ENCODE measurements at regions of chr9 and their contacts with region 1.

Region 1: DNA sequence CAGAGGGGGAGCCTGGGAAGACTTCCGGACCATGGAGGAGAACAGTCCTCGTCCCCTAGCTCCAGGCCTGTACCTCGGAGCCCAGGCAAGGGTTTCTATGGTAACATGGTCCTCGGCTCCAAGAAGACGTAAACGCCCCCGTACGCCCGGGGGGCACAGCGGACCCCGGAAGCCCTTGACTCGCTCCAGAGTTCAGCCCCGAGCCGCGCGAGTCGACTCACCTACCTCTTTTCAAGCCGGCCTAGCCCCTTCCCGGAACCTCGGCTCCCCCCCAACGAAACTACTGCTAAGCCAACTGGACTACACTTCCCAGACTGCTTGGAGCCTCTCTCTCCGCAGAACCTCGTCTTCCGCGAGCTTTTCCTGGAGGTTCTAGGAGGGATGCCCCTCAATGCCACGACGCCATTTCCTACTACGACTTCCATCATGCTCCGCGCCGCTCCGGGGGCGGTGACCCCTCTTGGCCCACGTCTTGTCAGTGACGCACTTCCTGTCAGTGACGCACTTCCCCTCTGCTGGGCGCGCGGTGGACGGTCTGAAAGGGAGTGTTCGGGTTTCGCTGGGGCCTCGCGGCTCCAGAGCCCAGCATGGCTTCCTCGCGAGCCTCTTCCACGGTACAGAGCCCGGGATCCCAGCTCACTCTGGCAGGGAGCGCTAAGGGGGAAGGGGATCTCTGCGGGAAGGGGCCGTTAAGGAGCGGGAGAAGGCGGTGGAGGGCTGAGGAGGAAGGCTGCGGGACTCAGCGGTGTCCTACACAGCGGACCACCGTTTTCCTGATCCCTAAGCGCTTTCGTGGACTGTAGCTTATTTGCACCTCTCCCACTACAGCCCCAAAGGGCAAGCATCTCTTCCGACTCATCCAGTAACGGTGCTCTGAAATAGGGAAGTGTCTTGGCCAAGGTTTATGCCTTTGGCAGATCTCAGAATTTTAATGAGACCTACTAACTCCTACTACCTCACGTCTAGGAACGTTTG is at the starts of genes CDC26 and PRPF4:
- DNase-seq: peak; percentile 91 to 97 (median 94)
- H3K4me3 ChIP-seq: peak within 1 kb of the TSS; percentile 86 to 92
- H3K4me3 Mint-ChIP-seq: no peak within 1 kb of the TSS
- H3K27ac ChIP-seq: peak within 1 kb of the TSS; percentile 93
- H3K27ac Mint-ChIP-seq: no peak within 1 kb of the TSS
- H3K4me1 ChIP-seq: peaks cover 22% of the 10 kb centered on the region
- H3K4me1 Mint-ChIP-seq: peaks cover 14 to 32% (median 21%) of the 10 kb centered on the region in 4 donors
- H3K27me3 ChIP-seq: no peaks in the 10 kb centered on the region
- H3K27me3 Mint-ChIP-seq: no peaks in the 10 kb centered on the region
- total RNA-seq, gene CDC26: 44.4 to 47.3 TPM
- total RNA-seq, gene PRPF4: 20.7 to 23.2 TPM

Region 2: GRCh38 chr9:111483862-111484571 is 1791.4 kb before region 1 on chr9 and contains the start of gene ECPAS:
- CTCF ChIA-PET with region 1: no interaction called
- POLR2A ChIA-PET with region 1: no interaction called
- intact Hi-C with region 1: loop called (anchors 2 kb)
- DNase-seq: peak; percentile 66 to 72 (median 71)
- H3K4me3 ChIP-seq: peak within 1 kb of the TSS; percentile 69 to 89
- H3K4me3 Mint-ChIP-seq: peak within 1 kb of the TSS; percentile 81 to 90 (median 86)
- H3K27ac ChIP-seq: peak within 1 kb of the TSS; percentile 83
- H3K27ac Mint-ChIP-seq: peak within 1 kb of the TSS; percentile 86 to 93 (median 89)
- H3K4me1 ChIP-seq: peaks cover 11% of the 10 kb centered on the region
- H3K4me1 Mint-ChIP-seq: peaks cover 23 to 37% (median 28%) of the 10 kb centered on the region in 4 donors
- H3K27me3 ChIP-seq: no peaks in the 10 kb centered on the region
- H3K27me3 Mint-ChIP-seq: no peaks in the 10 kb centered on the region
- total RNA-seq, gene ECPAS: 77.6 to 80.3 TPM

Region 3: DNA sequence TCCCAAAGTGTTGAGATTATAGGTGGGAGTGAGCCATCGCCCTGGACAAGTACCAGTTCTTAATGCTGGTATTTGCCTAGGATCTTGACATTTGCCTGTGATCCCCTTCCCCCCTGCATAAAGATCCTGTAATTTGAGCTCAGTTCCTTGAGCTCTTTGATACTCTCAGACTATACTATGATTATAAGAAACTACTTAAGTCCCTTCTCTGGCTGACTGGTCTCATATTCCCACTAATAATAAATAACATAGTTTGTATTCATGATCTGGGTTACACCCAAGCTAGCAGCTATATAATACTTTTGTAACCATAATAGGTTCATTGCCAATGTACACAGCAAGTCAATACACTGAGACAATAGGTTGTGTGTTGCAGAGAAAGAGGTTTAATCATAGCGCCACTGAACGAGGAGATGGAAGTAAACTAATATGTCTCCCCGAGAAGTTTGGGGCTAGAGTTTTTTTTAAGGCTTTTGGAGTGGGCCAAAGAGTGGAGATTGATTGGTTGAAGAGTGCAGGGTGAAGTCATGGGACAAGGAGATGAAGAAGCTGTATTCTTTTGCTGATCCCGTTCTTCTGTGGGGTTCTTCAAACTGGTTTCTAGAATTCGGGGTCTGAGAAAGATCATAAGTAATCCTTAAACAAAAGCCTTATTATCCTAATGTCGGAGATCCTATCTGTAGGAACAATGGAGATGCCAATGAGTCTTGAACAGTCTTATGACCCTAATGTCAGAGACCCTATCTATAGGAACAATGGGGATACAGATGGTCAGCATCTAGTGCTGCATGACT is 1460.0 kb before region 1 on chr9:
- CTCF ChIA-PET with region 1: no interaction called
- POLR2A ChIA-PET with region 1: no interaction called
- intact Hi-C with region 1: no loop called
- DNase-seq: no peak
- H3K4me3 ChIP-seq: no peak overlapping the region
- H3K4me3 Mint-ChIP-seq: no peak overlapping the region
- H3K27ac ChIP-seq: no peak overlapping the region
- H3K27ac Mint-ChIP-seq: no peak overlapping the region
- H3K4me1 ChIP-seq: no peaks in the 10 kb centered on the region
- H3K4me1 Mint-ChIP-seq: no peaks in the 10 kb centered on the region
- H3K27me3 ChIP-seq: no peaks in the 10 kb centered on the region
- H3K27me3 Mint-ChIP-seq: no peaks in the 10 kb centered on the region

Region 4: DNA sequence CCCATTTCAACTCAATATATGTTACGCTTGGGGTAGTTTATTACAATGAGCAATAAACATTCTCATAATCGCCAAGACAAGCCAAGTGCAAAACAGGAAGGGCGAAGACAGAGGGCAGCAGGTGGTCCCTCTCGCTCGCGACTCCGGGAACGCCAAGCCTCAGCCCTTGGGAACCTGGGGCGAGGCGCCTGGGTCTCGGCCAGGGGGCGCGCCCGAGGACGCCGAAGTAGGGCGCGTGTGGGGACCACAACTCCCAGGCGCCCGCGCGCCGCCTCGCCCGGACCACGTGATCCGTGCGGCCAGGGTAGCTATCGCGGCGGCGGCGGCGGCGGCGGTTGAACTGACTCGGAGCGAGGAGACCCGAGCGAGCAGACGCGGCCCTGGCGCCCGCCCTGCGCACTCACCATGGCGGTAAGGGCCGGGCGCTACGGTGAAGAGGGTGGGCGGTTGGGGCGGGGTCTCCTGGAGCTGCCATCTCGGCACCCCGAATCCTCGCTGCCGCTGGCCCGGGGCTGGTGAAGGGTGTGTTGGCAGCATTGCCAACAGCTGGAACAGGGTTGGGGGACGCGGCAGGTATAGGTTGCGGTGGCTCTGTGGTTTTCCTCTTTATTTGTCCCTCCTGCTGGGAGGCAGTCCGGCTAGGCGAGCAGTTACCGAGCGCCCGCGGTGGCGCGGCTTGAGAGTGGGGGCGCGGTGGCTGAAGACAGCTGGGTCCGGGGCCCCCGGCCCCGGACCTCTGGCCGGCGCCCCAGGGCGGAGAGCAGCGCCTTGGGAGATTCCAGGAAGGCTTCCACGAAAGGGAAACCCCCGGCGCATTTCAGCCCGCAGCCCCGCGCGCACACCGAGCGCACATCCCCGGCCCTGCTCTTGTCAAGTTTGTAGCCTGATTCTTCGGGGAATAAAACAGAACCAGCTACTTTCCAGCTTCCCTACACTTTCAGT is 124.5 kb before region 1 on chr9 and contains the start of gene SLC31A2:
- CTCF ChIA-PET with region 1: interaction called, 9 read pairs
- POLR2A ChIA-PET with region 1: interaction called, 10 read pairs
- intact Hi-C with region 1: loop called (anchors 1 kb)
- DNase-seq: peak; percentile 80 to 85 (median 81)
- H3K4me3 ChIP-seq: peak within 1 kb of the TSS; percentile 47 to 76
- H3K4me3 Mint-ChIP-seq: peak within 1 kb of the TSS; percentile 83 to 87 (median 86)
- H3K27ac ChIP-seq: peak within 1 kb of the TSS; percentile 50
- H3K27ac Mint-ChIP-seq: peak within 1 kb of the TSS; percentile 51 to 84 (median 76)
- H3K4me1 ChIP-seq: peaks cover 29% of the 10 kb centered on the region
- H3K4me1 Mint-ChIP-seq: peaks cover 12 to 40% (median 30%) of the 10 kb centered on the region in 4 donors
- H3K27me3 ChIP-seq: no peaks in the 10 kb centered on the region
- H3K27me3 Mint-ChIP-seq: peaks cover 2 to 6% of the 10 kb centered on the region in 2 donors
- total RNA-seq, gene SLC31A2: 5.3 to 6.1 TPM

Region 5: GRCh38 chr9:113289091-113289490 is 13.6 kb after region 1 on chr9:
- CTCF ChIA-PET with region 1: interaction called, 14 read pairs
- POLR2A ChIA-PET with region 1: interaction called, 5 read pairs
- intact Hi-C with region 1: no loop called
- DNase-seq: no peak
- H3K4me3 ChIP-seq: no peak overlapping the region
- H3K4me3 Mint-ChIP-seq: no peak overlapping the region
- H3K27ac ChIP-seq: no peak overlapping the region
- H3K27ac Mint-ChIP-seq: peak overlapping the region in 1 of 7 donors; percentile 3
- H3K4me1 ChIP-seq: no peaks in the 10 kb centered on the region
- H3K4me1 Mint-ChIP-seq: peaks cover 0 to 2% (median 0%) of the 10 kb centered on the region in 4 donors
- H3K27me3 ChIP-seq: no peaks in the 10 kb centered on the region
- H3K27me3 Mint-ChIP-seq: no peaks in the 10 kb centered on the region

Region 6: DNA sequence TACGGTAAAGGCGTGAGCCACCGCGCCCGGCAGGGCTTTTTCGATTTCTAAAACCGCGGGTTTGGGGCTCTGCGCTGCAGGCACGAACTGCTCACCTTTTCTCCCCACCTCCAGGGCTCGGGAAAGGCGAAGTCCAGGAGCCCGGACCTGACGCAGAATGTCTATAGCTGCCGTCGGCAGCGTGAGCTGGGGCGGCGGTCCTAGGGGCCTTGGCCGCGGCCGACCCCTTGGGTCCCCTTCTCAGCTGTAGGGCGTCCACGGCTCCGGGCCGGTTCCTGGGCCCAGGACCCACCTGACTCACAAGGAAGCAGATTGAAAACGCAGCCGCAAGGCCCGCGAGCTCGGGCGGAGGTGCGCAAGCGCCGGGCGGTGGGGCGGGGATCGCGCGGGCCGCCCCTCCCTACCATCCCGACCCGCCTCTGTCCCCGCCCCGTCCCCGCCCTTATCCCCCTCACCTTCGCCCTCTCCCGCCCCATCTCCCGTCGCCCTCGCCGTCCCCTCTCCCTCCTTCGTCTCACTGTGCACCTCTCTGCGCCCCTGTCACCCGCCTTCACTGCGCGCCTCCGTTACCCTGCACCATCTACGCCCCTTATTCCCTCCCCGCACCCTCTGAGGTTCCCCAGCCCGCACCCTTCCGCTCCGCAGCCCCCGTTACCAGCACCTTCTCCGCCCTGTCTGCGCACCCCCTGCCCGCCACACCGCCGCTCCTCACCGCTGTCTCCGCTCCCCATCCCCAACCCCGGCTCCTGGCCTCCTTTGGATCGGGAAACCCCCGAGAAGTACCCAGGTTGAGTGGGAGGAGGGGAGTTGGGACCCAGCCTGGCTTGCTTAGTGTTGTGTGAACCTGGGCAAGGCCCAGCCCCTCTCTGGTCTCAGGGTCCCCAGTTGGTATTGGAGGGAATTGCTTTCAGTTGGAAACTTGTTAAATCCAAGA is 101.5 kb after region 1 on chr9 and contains the start of gene HDHD3:
- CTCF ChIA-PET with region 1: interaction called, 3 read pairs
- POLR2A ChIA-PET with region 1: interaction called, 9 read pairs
- intact Hi-C with region 1: loop called (anchors 1 kb)
- DNase-seq: peak; percentile 78 to 81 (median 80)
- H3K4me3 ChIP-seq: peak within 1 kb of the TSS; percentile 57 to 92
- H3K4me3 Mint-ChIP-seq: peak within 1 kb of the TSS; percentile 88 to 93 (median 90)
- H3K27ac ChIP-seq: peak within 1 kb of the TSS; percentile 66
- H3K27ac Mint-ChIP-seq: peak within 1 kb of the TSS; percentile 74 to 96 (median 89)
- H3K4me1 ChIP-seq: peaks cover 13% of the 10 kb centered on the region
- H3K4me1 Mint-ChIP-seq: peaks cover 12 to 23% (median 17%) of the 10 kb centered on the region in 4 donors
- H3K27me3 ChIP-seq: no peaks in the 10 kb centered on the region
- H3K27me3 Mint-ChIP-seq: no peaks in the 10 kb centered on the region
- total RNA-seq, gene HDHD3: 29.9 to 32.8 TPM

Region 7: DNA sequence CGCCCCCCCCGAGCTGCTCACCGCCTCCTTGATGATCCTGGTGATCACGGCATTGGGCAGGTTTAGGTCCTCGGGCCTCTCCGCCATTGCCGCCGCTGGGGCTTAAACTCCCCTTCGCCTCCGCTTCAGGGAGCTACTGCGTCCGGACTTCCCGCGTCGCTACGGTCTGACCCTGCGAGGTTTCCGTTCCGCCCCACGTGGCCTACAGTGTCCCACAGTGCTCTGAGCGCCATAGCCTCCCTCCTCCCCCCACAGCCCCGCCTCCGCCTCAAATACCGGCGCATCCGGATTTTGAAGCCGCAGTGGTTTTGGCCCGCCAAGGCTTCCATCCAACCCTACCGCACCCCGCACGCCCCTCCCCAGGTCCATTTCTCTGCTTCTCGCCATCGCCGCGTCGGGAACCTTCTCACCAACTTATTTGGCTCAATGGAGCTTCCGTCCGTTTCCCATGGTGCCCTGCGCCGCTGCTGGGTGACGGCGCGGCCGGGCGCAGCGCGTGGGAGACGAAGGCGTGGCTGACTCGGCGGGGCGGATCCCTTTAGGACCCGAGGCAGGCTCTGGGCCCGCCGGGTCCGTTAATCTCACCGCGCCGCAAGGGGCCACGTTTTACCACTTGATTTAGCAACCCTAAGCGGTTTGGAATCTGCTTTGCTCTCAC is 134.9 kb after region 1 on chr9 and contains the starts of genes C9orf43 and POLE3:
- CTCF ChIA-PET with region 1: interaction called, 28 read pairs
- POLR2A ChIA-PET with region 1: interaction called, 25 read pairs
- intact Hi-C with region 1: loop called (anchors 1 kb)
- DNase-seq: peak; percentile 94 to 97 (median 95)
- H3K4me3 ChIP-seq: peak within 1 kb of the TSS; percentile 65 to 88
- H3K4me3 Mint-ChIP-seq: peak within 1 kb of the TSS; percentile 95 to 100 (median 98)
- H3K27ac ChIP-seq: peak within 1 kb of the TSS; percentile 84
- H3K27ac Mint-ChIP-seq: peak within 1 kb of the TSS; percentile 99 to 100 (median 99)
- H3K4me1 ChIP-seq: peaks cover 27% of the 10 kb centered on the region
- H3K4me1 Mint-ChIP-seq: peaks cover 17 to 44% (median 33%) of the 10 kb centered on the region in 4 donors
- H3K27me3 ChIP-seq: no peaks in the 10 kb centered on the region
- H3K27me3 Mint-ChIP-seq: peaks cover 2 to 3% of the 10 kb centered on the region in 2 donors
- total RNA-seq, gene C9orf43: 0.86 to 0.87 TPM
- total RNA-seq, gene POLE3: 46.9 TPM

Region 8: DNA sequence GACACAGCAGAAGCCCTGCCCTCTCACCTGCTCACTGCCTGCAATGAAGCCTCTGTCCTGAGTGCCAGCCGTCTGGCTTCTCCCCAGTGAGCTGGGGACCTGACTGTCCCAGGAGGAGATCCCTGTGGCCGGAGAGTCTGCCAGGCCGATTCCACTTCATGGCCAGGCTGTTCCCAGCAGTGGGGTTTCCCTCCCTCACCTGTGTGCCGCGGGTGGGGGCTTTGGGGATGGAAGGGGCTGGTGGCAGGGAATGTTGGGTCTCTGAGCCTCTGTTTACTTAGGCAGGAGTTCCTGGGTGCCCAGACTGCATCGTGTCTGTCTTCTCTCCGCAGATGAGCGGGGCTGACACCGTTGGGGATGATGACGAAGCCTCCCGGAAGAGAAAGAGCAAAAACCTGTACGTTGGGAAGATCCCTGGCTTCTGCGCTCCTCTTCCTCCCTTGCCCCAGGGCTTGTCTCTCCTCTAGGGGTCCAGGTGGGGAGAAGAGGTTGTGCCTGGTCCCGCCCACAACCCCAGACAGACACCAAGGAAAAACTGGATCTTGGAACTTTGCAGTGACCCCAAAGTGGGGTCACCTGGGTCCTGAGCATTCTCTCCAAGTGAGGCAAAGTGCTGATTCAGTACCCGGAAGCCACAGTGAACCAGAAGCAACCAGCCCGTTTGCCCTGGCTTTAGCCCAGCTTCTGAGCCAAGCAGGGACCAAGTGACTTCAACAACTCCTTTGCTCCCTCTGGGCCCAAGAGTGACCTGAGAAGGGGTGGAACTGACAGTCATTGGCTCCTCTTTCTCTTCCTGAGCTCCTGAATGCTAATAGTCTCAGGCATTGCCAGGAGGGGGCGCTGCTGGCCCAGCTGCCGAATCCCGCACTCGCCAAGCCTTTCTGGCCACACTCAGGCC is 315.8 kb after region 1 on chr9:
- CTCF ChIA-PET with region 1: interaction called, 13 read pairs
- POLR2A ChIA-PET with region 1: no interaction called
- intact Hi-C with region 1: loop called (anchors 1 kb)
- DNase-seq: peak in 4 of 5 donors; percentile 25 to 33 (median 28)
- H3K4me3 ChIP-seq: no peak overlapping the region
- H3K4me3 Mint-ChIP-seq: no peak overlapping the region
- H3K27ac ChIP-seq: no peak overlapping the region
- H3K27ac Mint-ChIP-seq: peak overlapping the region in 3 of 7 donors; percentile 41 to 74 (median 73)
- H3K4me1 ChIP-seq: peaks cover 17% of the 10 kb centered on the region
- H3K4me1 Mint-ChIP-seq: peaks cover 18 to 46% (median 25%) of the 10 kb centered on the region in 4 donors
- H3K27me3 ChIP-seq: no peaks in the 10 kb centered on the region
- H3K27me3 Mint-ChIP-seq: no peaks in the 10 kb centered on the region